AG04450 (cell line): ENCODE measurements at regions of chr20 and their contacts with region 1.

Region 1: DNA sequence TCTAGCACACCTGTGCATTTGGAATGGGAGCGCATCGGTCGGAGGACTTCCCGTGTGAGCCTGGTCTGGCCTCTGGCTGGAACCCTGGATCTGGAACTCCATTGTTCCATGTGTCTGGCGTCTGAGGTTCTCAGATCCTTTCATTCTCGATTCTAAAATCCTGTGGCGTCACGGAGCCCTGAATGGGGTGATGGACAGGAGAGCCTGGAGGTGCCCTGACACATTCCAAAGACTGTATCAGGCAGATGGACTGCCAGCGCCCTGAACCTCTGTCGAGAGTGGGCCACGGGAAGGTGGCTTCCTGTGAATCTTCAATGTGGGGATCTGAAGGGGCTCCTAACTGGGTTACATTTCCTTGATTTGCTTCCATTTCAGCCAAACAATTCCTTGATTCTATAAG is 20.6 kb downstream of the MYH7B start:
- DNase-seq: no peak
- H3K4me3 ChIP-seq: no peak overlapping the region
- H3K27ac ChIP-seq: no peak overlapping the region
- H3K27me3 ChIP-seq: peaks cover 12% of the 10 kb centered on the region
- CTCF ChIP-seq: no peak

Region 2: DNA sequence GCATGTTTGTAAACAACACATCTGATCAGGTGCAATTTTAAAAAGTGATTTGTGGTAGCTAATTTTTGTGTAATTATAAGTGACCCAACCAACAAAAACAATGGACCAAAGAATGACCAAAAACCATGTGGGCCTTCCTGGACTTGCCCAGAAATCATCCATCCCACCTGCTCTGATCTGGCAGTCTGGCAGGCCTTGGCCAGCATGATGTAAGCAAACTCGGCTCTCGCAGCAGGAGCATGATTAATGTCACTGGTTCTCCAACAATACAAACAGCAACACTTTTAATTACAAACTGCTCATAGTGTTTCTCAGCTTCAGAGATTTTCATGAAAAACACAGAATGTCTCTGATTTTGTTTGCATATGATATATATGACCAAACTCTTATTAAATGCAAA is 256.0 kb before region 1 on chr20:
- CTCF ChIA-PET with region 1: no interaction called
- POLR2A ChIA-PET with region 1: interaction called, 18 read pairs
- DNase-seq: no peak
- H3K4me3 ChIP-seq: no peak overlapping the region
- H3K27ac ChIP-seq: no peak overlapping the region
- H3K27me3 ChIP-seq: no peaks in the 10 kb centered on the region
- CTCF ChIP-seq: no peak